Gastrocnemius medialis (tissue), 4 donors: ENCODE measurements at regions of chr17 and their contacts with region 1.

Region 1: DNA sequence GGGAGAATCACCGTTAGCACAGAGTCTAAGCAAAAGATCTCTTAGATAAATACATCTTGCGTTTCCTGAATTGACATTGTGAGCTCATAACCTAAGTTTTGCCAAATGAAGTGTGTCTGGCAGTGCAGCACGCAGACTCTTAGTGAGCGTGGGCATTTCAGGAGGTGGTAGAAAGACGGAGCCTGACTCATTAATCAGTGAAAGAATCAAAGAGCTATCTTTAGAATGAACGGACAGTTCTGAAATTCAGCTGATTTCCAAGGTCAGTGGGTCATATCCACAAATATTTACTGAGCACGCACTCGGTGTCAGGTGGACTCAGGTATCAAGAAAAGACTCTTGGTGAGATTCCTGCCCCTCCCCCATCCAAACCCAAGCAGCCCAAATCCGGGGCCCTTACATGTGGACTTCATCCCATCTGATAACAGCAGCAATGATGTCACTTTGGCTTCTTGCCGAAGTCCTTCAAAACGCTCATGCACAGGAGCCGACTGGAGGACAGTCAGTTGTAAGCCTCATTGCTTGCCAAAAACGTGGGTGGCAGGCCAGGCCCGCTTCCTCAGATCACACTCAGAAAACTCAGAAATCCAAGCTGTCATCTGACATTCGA is 185.8 kb downstream of the HS3ST3A1 start:
- DNase-seq: no peak
- ATAC-seq: no peak
- H3K4me3 ChIP-seq: no peak overlapping the region
- H3K27ac ChIP-seq: no peak overlapping the region
- H3K4me1 ChIP-seq: no peaks in the 10 kb centered on the region
- H3K27me3 ChIP-seq: no peaks in the 10 kb centered on the region
- CTCF ChIP-seq: no peak
- POLR2A ChIP-seq: no peak

Region 2: DNA sequence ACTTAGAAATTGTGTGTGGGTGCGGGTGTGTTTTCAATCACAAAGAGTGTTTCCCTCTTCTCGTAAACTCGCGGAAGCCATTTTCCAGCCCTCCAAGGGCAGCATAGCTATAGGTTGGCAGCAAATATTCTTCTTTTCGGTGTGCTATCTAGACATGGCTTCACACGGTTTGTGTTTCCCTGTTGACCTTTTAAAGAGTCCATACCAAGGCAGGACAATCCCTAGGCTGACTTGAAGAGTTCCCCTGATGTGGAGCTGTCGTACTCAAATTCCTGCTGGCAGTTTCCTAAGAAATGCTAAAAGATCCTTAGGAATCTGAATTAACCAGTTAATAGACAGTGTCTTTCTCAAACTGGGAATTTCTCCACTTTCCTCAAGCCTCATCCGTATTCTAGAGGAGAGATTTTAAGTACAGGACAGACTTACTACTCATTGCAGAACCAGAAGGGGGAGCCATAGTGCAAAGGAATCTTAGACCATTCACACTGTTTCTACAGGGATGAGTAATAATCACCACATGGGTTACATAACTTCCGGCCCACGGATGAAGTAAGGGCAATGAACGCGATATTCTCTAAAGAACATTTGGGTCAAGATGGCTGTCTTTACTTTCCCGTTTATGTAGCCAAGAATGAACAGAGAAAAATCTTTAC is 109.5 kb before region 1 on chr17:
- in situ Hi-C with region 1: loop called in 1 of 4 experiments (anchors 25 kb)
- intact Hi-C with region 1: no loop called
- DNase-seq: no peak
- ATAC-seq: no peak
- H3K4me3 ChIP-seq: no peak overlapping the region
- H3K27ac ChIP-seq: no peak overlapping the region
- H3K4me1 ChIP-seq: no peaks in the 10 kb centered on the region
- H3K27me3 ChIP-seq: no peaks in the 10 kb centered on the region
- CTCF ChIP-seq: no peak
- POLR2A ChIP-seq: no peak